Endothelial cell of umbilical vein (primary cell): ENCODE measurements at regions of chr3 and their contacts with region 1.

Region 1: DNA sequence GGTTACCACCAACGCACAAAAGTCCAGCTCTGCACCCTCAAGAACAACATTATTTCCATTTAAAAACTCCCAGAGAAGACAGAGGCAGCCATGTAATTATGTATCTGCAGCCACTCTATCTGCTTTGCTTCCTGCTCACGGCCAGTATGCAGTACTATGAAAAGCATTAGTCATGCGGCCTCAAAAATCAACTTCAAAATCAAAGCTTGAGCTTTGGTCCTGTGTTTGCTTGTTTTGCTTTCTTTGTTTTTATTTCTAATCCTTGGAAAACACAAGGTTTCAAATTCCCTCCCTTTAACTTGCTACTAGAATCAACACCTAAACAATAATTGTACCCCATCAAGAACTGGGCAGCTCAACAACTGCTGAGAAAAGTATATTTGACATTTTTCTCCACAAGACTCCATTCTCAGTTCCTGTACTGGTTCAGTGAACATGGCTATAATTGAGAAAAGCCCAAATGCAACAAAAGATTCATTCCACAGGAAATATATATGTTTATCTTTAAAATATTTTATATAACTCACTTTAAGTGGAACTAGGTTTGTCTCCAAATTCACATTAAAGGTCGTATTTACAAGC is 37.6 kb downstream of the GBE1 start:
- DNase-seq: peak; percentile 78
- H3K4me3 ChIP-seq: no peak overlapping the region
- H3K27ac ChIP-seq: peak overlapping the region; percentile 84
- H3K4me1 ChIP-seq: peaks cover 50% of the 10 kb centered on the region
- H3K27me3 ChIP-seq: no peaks in the 10 kb centered on the region
- CTCF ChIP-seq: no peak
- POLR2A ChIP-seq: no peak

Region 2: DNA sequence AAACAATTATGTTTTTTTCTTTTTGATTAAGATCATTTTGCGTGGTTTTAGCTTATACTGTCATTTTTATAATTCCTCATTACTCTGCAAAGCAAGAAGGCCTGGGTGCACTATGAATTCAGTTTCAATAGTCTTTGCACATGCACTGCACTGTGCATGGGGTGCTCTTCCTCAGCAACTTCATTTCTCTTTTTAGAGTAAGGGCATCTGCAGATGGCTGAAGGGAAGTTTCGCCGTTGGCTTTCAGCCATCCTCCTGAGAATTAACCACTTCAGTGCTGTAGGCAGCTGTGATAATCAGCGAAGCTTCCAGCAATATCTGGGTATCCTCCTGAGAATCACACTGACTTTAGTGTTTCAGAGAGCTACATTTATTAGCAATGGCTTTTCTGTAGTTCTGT is 247.1 kb before region 1 on chr3:
- CTCF ChIA-PET with region 1: no interaction called
- POLR2A ChIA-PET with region 1: no interaction called
- dilution Hi-C with region 1: no loop called
- intact Hi-C with region 1: loop called (anchors 10 kb)
- DNase-seq: no peak
- H3K4me3 ChIP-seq: no peak overlapping the region
- H3K27ac ChIP-seq: no peak overlapping the region
- H3K4me1 ChIP-seq: peaks cover 26% of the 10 kb centered on the region
- H3K27me3 ChIP-seq: no peaks in the 10 kb centered on the region
- CTCF ChIP-seq: no peak
- POLR2A ChIP-seq: no peak

Region 3: DNA sequence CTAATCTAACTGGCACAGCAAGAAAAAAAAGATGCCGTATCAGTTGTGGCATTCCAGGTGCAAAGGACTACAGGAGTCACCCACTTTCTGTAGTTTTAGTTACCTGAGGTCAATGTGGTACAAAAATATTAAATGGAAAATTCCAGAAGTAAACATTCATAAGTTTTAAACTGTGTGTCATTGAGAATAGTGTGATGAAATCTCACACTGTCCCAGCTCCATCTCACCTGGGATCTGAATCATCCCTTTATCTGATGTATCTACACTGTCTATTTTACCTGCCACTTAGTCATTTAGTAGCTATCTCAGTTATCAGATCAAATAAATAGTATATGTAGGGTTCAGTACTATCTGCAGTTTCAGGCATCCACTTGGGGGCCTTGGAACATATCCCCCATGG is 10.9 kb after region 1 on chr3:
- CTCF ChIA-PET with region 1: interaction called, 12 read pairs
- POLR2A ChIA-PET with region 1: interaction called, 4 read pairs
- dilution Hi-C with region 1: no loop called
- intact Hi-C with region 1: no loop called
- DNase-seq: no peak
- H3K4me3 ChIP-seq: no peak overlapping the region
- H3K27ac ChIP-seq: no peak overlapping the region
- H3K4me1 ChIP-seq: no peaks in the 10 kb centered on the region
- H3K27me3 ChIP-seq: no peaks in the 10 kb centered on the region
- CTCF ChIP-seq: no peak
- POLR2A ChIP-seq: no peak